ENCODE measurements at regions of chr17 and their contacts with region 1.

Region 1: DNA sequence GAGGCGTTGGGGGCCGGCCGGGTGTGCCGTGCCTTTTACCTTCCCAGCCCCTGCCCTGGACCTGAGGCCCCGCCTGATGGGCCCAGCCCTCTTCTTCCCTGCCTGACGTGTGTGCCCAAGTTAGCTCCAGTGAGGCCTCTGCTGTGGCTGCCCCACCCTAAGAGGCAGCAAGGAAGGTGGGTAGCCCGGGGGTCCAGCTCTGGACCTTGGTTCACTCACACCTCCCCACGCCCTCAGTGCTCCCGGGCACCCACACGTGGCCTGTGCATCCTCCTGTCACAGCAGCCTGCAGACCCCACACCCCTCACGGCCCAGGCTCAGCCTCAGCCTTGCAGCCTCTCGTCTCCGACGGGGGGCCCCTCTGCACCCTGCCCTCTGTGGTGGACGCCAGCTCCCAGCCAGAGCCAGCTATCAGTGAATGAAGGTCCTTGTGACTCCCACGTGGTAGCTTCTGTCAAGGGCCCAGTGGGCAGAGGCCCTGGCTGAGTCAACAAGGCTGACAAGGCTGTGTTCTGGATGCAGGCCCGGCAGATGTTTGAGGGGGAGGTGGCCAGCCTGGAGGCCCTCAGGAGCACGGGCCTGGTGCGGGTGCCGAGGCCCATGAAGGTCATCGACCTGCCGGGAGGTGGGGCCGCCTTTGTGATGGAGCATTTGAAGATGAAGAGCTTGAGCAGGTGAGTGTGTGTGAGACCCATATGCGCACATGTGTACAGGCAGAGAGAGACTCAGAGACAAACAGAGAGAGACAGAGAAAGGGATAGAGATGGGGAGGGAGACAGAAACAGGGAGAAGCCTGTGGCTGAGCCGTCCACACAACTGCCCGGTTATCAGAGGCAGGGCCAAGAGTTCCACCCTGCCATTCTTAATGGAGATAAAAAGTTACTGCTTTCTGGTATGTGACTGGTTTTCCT is 2.8 kb downstream of the FN3K start:
- DNase-seq: no peak
- H3K4me3 ChIP-seq: no peak overlapping the region
- H3K27ac ChIP-seq: no peak overlapping the region
- H3K4me1 ChIP-seq: peaks cover 0 to 2% (median under 1%) of the 10 kb centered on the region in 4 experiments; a peak in 2 of 7 replicates
- H3K27me3 ChIP-seq: peaks cover 0 to 3% (median 0%) of the 10 kb centered on the region in 4 experiments; a peak in 2 of 7 replicates
- CTCF ChIP-seq: no peak
- EP300 ChIP-seq: no peak
- POLR2A ChIP-seq: no peak
- RAD21 ChIP-seq: no peak

Region 2: GRCh38 chr17:82662711-82663261 is 75.4 kb before region 1 on chr17:
- CTCF ChIA-PET with region 1: no interaction called
- POLR2A ChIA-PET with region 1: no interaction called
- DNase-seq: no peak
- H3K4me3 ChIP-seq: no peak overlapping the region
- H3K27ac ChIP-seq: no peak overlapping the region; the same call in 1 of the 2 replicates
- H3K4me1 ChIP-seq: no peaks in the 10 kb centered on the region
- H3K27me3 ChIP-seq: no peaks in the 10 kb centered on the region
- CTCF ChIP-seq: peak in 1 of 3 experiments; percentile 22; a peak in 1 of 4 replicates
- EP300 ChIP-seq: no peak
- POLR2A ChIP-seq: no peak
- RAD21 ChIP-seq: peak; percentile 34 to 52; a peak in 3 of 4 replicates

Region 3: DNA sequence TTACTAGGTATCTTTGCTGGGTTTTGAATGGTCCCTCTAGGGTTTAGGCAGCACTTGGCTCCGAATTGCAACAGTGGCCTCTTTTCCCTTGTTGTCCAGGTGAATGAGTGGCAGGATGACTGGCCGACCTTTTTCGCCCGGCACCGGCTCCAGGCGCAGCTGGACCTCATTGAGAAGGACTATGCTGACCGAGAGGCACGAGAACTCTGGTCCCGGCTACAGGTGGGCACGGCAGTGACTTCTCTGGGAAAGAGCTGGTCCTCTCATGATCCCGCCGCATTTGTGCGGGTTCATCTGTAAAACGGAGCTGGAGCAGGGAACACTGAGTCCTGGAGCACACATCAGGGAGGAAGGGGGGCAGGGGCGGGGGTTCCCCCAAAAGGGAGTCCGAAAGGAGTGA is 10.5 kb after region 1 on chr17:
- CTCF ChIA-PET with region 1: interaction called, 7 read pairs
- POLR2A ChIA-PET with region 1: interaction called, 10 read pairs
- DNase-seq: no peak
- H3K4me3 ChIP-seq: no peak overlapping the region
- H3K27ac ChIP-seq: no peak overlapping the region
- H3K4me1 ChIP-seq: peaks cover 0 to 8% (median 2%) of the 10 kb centered on the region in 4 experiments; a peak in 4 of 7 replicates
- H3K27me3 ChIP-seq: peaks cover 0 to 6% (median 3%) of the 10 kb centered on the region in 4 experiments; a peak in 4 of 7 replicates
- CTCF ChIP-seq: no peak
- EP300 ChIP-seq: no peak
- POLR2A ChIP-seq: no peak
- RAD21 ChIP-seq: no peak

Measured in H1 (cell line).